Activated CD4-positive, alpha-beta T cell treated with anti-CD3 and anti-CD28 coated beads for 36 hours (primary cell): ENCODE measurements at regions of chr14 and their contacts with region 1.

Region 1: GRCh38 chr14:74062829-74063190 is 21.4 kb downstream of the ALDH6A1 start:
- DNase-seq: no peak
- ATAC-seq: no peak
- H3K4me3 Mint-ChIP-seq: no peak overlapping the region
- H3K27ac Mint-ChIP-seq: no peak overlapping the region
- H3K4me1 Mint-ChIP-seq: no peaks in the 10 kb centered on the region
- H3K27me3 Mint-ChIP-seq: no peaks in the 10 kb centered on the region

Region 2: GRCh38 chr14:73802431-73803188 is 260.2 kb before region 1 on chr14:
- CTCF ChIA-PET with region 1: no interaction called
- POLR2A ChIA-PET with region 1: interaction called, 11 read pairs
- intact Hi-C with region 1: no loop called
- DNase-seq: no peak
- ATAC-seq: no peak
- H3K4me3 Mint-ChIP-seq: no peak overlapping the region
- H3K27ac Mint-ChIP-seq: no peak overlapping the region
- H3K4me1 Mint-ChIP-seq: no peaks in the 10 kb centered on the region
- H3K27me3 Mint-ChIP-seq: no peaks in the 10 kb centered on the region